Activated CD8-positive, alpha-beta memory T cell treated with anti-CD3 and anti-CD28 coated beads, Interleukin-2, amount 10 ng/mL, durations not matched to agents 7 days and 5 days (primary cell): ENCODE measurements at regions of chr11 and their contacts with region 1.

Region 1: GRCh38 chr11:67401495-67402191 is at the start of gene PPP1CA:
- DNase-seq: peak; percentile 92
- ATAC-seq: peak; percentile 74
- H3K4me3 Mint-ChIP-seq: peak within 1 kb of the TSS; percentile 90
- H3K27ac Mint-ChIP-seq: peak within 1 kb of the TSS; percentile 86
- H3K4me1 Mint-ChIP-seq: peaks cover 65% of the 10 kb centered on the region
- H3K27me3 Mint-ChIP-seq: no peaks in the 10 kb centered on the region
- total RNA-seq, gene PPP1CA: 309 to 360 TPM

Region 2: DNA sequence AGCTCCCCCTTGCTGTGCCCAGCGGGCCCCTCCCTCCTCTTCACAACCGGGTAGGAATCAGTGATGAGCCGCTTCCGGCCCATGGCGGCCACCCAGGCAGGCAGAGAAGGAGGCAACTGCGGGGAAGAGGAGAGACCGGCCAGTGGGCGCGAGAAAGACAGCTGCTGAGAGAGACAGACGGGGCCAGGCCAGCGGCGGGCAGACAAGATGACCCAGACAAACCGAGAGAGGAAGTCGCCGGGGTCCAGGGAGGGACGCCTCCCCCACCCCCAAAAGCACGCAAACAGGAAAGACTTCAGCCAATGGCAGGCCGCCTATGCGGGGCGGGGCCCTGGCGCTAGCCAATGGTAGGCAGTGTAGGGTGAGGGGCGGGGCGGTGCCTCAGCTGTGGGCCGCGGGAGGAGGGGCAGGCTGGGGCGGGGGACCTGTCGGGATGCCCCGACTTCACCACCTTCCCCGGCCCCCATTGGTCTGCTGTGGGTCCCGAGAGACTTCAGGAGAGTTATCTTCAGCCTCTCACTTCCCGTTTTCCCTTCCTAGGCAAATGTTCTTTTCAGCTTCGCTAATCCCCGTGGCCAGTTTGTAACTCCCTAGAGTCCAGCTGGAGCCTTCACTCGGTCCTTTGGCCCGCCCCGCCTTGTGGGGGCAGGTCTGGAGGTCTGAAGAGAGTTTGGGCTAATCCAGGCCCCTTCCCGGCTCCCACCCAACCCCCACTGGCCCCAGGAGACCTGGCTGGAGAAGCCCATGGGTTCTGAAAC is 48.1 kb before region 1 on chr11 and contains the start of gene POLD4:
- CTCF ChIA-PET with region 1: interaction called, 19 read pairs
- DNase-seq: peak; percentile 97
- ATAC-seq: peak; percentile 93
- H3K4me3 Mint-ChIP-seq: peak within 1 kb of the TSS; percentile 89
- H3K27ac Mint-ChIP-seq: peak within 1 kb of the TSS; percentile 97
- H3K4me1 Mint-ChIP-seq: peaks cover 36% of the 10 kb centered on the region
- H3K27me3 Mint-ChIP-seq: peaks cover 5% of the 10 kb centered on the region
- total RNA-seq, gene POLD4: 36.5 to 49.6 TPM

Region 3: GRCh38 chr11:67391304-67392132 is 10.1 kb before region 1 on chr11 and contains the start of gene RAD9A:
- CTCF ChIA-PET with region 1: interaction called, 53 read pairs
- DNase-seq: peak; percentile 97
- ATAC-seq: peak; percentile 88
- H3K4me3 Mint-ChIP-seq: peak within 1 kb of the TSS; percentile 95
- H3K27ac Mint-ChIP-seq: peak within 1 kb of the TSS; percentile 80
- H3K4me1 Mint-ChIP-seq: peaks cover 40% of the 10 kb centered on the region
- H3K27me3 Mint-ChIP-seq: no peaks in the 10 kb centered on the region
- total RNA-seq, gene RAD9A: 49.6 to 80.5 TPM

Region 4: DNA sequence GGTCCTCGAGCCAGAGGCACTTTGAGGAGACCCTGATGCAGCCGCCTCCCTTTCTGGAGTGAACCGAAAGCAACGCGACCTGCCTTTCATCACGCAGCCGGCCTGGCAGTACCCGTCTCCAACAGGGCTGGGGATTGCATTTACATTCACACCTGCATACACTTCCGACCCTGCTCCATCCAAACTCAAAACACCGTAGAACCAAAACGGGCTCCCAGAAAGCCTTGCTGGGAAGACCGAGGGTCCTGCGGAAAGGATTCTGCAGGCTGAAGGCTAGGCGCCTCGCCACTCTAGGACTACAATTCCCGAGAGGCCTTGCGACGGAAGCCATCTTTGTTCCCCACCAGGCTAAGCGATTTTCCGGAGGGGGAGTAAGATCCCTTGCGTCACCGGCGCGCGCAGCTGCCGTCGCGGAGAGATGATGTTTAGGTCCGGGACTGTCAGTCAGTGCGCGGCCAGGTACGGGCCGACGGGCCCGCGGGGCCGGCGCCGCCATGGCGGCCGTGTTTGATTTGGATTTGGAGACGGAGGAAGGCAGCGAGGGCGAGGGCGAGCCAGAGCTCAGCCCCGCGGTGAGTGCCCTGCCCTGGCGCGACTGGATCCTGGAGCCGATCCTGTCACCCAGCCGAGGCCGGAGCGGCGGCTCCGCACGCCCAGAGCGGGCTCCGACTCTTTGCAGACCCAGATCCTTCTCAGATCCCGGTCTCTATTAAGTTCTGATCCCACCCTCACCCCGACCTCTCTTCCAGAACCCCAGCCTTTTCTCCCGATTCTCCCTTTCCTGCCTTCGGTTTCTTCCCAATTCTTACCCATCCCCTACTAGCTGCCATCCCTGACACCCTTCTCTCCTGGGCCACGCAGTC is 26.6 kb after region 1 on chr11 and contains the start of gene RPS6KB2:
- CTCF ChIA-PET with region 1: interaction called, 96 read pairs
- DNase-seq: peak; percentile 100
- ATAC-seq: peak; percentile 91
- H3K4me3 Mint-ChIP-seq: peak within 1 kb of the TSS; percentile 94
- H3K27ac Mint-ChIP-seq: peak within 1 kb of the TSS; percentile 95
- H3K4me1 Mint-ChIP-seq: peaks cover 51% of the 10 kb centered on the region
- H3K27me3 Mint-ChIP-seq: no peaks in the 10 kb centered on the region
- total RNA-seq, gene RPS6KB2: 63.3 to 65.0 TPM

Region 5: GRCh38 chr11:67468835-67469811 is 67.5 kb after region 1 on chr11 and contains the start of gene TMEM134:
- CTCF ChIA-PET with region 1: interaction called, 21 read pairs
- DNase-seq: peak; percentile 95
- ATAC-seq: peak; percentile 86
- H3K4me3 Mint-ChIP-seq: peak within 1 kb of the TSS; percentile 83
- H3K27ac Mint-ChIP-seq: peak within 1 kb of the TSS; percentile 82
- H3K4me1 Mint-ChIP-seq: peaks cover 30% of the 10 kb centered on the region
- H3K27me3 Mint-ChIP-seq: no peaks in the 10 kb centered on the region
- total RNA-seq, gene TMEM134: 32.8 to 41.9 TPM

Region 6: DNA sequence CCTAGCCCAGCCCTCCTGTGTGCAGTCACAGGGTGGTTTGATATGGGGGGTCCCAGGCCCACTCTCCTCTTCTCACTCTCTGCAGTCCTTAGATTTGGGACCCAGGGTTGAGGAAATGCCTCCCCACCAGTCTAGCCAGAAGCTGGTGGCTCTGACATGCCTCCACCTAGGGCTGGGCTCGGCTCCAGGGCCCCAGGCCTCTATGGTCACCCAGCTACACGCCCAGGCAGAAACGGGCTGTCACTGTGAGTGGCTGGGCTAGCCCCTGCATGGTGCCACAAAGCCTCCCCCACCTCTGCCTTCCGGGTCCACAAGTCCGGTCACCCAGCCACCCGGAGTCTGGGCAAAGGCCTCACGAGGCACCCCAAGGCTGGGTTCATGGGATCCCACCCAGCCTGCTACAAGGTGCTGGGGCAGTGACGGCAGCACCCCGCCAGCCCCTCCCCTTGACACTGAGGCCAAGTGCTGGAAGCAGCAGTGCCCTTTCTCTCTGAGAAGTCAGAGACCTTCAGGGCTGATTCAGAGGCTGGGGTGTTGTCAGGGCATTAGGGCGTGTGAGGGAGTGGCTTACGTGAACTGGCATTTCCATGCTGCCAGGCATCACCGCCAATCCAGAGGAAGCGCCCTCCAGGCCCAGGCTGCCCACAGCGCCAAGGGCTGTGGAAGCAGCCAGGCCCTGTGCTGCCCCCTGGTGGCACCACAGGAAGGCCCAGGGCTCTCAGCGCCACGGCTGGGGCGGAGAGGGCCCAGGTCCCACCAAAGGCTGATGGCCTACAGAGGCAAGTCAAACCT is 104.2 kb after region 1 on chr11:
- CTCF ChIA-PET with region 1: interaction called, 23 read pairs
- DNase-seq: peak; percentile 93
- ATAC-seq: peak; percentile 50
- H3K4me3 Mint-ChIP-seq: peak overlapping the region; percentile 92
- H3K27ac Mint-ChIP-seq: peak overlapping the region; percentile 94
- H3K4me1 Mint-ChIP-seq: peaks cover 51% of the 10 kb centered on the region
- H3K27me3 Mint-ChIP-seq: peaks cover 2% of the 10 kb centered on the region

Region 7: GRCh38 chr11:67640021-67640757 is 238.5 kb after region 1 on chr11:
- CTCF ChIA-PET with region 1: no interaction called
- DNase-seq: peak; percentile 76
- ATAC-seq: peak; percentile 84
- H3K4me3 Mint-ChIP-seq: no peak overlapping the region
- H3K27ac Mint-ChIP-seq: no peak overlapping the region
- H3K4me1 Mint-ChIP-seq: peaks cover 15% of the 10 kb centered on the region
- H3K27me3 Mint-ChIP-seq: peaks cover 4% of the 10 kb centered on the region